Activated T-helper 1 cell treated with anti-CD3 and anti-CD28 coated beads, Interleukin-12 subunit alpha, Interleukin-12 subunit beta, Interleukin-2, Interleukin-4 antibody, amounts not matched to agents 30 ng/mL and 10 ng/mL and 1 ng/mL, durations not matched to agents 14 hours and 24 hours and 36 hours (primary cell): ENCODE measurements at regions of chr1 and their contacts with region 1.

Region 1: DNA sequence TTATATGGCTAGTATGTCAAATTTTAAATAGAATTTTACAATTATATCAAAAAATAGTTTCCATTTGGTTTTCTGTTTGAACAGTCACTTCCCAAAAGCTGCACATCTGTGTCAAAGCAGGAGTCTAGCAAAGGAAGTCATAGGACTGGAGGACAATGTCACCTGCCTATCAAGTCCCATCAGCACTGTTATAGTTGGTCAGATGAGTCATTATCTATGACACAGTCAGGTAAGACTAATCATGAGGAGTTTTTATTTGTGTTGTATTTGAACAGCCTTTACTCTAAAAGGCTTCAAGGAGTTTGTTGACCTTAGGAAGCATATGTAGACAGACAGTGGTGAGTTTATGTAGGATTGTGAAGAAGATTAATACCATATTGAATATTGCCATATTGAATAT is 74.2 kb upstream of the QSOX1 start:
- DNase-seq: no peak
- H3K4me3 Mint-ChIP-seq: no peak overlapping the region
- H3K27ac Mint-ChIP-seq: no peak overlapping the region
- H3K4me1 Mint-ChIP-seq: no peaks in the 10 kb centered on the region
- H3K27me3 Mint-ChIP-seq: no peaks in the 10 kb centered on the region

Region 2: GRCh38 chr1:179794669-179795068 is 285.8 kb before region 1 on chr1:
- intact Hi-C with region 1: no loop called
- DNase-seq: no peak
- H3K4me3 Mint-ChIP-seq: no peak overlapping the region
- H3K27ac Mint-ChIP-seq: no peak overlapping the region
- H3K4me1 Mint-ChIP-seq: no peaks in the 10 kb centered on the region
- H3K27me3 Mint-ChIP-seq: peaks cover 11% of the 10 kb centered on the region

Region 3: DNA sequence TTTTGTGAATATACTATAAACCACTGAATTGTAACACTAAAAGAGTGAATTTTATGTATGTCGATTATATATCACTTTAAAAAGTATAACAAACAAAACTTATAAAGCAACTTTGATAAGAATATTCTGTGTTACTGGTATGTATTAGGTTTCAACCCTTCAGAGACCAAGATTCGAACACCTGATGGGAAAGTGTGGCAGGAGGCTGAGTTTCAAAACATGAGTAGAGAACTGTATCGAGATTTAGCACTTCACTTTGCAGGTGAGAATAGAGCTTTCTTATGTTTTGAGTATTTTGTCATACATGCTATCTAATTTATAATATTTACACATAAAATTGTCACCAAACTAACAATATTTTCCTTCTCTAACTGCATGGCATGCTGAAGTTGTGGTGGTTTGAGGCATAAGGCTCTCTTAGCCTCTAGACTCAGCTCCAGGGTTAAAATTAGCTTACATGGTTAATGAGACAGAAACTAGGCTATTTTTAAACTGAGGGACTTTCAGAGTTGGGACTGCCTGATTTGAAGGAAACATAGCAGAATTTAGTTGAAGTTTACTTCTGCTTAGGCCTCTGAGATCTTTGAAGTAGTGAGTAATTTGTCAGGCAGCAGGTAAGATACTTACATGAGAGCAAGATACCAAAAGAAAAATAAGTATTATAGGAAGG is 77.3 kb before region 1 on chr1:
- intact Hi-C with region 1: loop called (anchors 2 kb)
- DNase-seq: no peak
- H3K4me3 Mint-ChIP-seq: no peak overlapping the region
- H3K27ac Mint-ChIP-seq: no peak overlapping the region
- H3K4me1 Mint-ChIP-seq: no peaks in the 10 kb centered on the region
- H3K27me3 Mint-ChIP-seq: no peaks in the 10 kb centered on the region

Region 4: GRCh38 chr1:180020017-180020416 is 60.4 kb before region 1 on chr1:
- intact Hi-C with region 1: no loop called
- DNase-seq: no peak
- H3K4me3 Mint-ChIP-seq: no peak overlapping the region
- H3K27ac Mint-ChIP-seq: peak overlapping the region; percentile 24
- H3K4me1 Mint-ChIP-seq: no peaks in the 10 kb centered on the region
- H3K27me3 Mint-ChIP-seq: no peaks in the 10 kb centered on the region

Region 5: GRCh38 chr1:180116964-180117763 is 36.7 kb after region 1 on chr1:
- intact Hi-C with region 1: no loop called
- DNase-seq: no peak
- H3K4me3 Mint-ChIP-seq: no peak overlapping the region
- H3K27ac Mint-ChIP-seq: no peak overlapping the region
- H3K4me1 Mint-ChIP-seq: no peaks in the 10 kb centered on the region
- H3K27me3 Mint-ChIP-seq: no peaks in the 10 kb centered on the region